SK-N-SH (cell line): ENCODE measurements at regions of chr5 and their contacts with region 1.

Region 1: GRCh38 chr5:159156426-159157238 is 52.7 kb downstream of the RNF145 start:
- DNase-seq: peak; percentile 68
- H3K4me3 ChIP-seq: peak overlapping the region in 1 of 2 experiments; percentile 27; a peak in 1 of 4 replicates
- H3K27ac ChIP-seq: no peak overlapping the region
- H3K4me1 ChIP-seq: peaks cover 0 to 18% of the 10 kb centered on the region in 2 experiments; a peak in 3 of 4 replicates
- H3K27me3 ChIP-seq: no peaks in the 10 kb centered on the region
- CTCF ChIP-seq: peak; percentile 94
- EP300 ChIP-seq: no peak
- RAD21 ChIP-seq: peak; percentile 91

Region 2: DNA sequence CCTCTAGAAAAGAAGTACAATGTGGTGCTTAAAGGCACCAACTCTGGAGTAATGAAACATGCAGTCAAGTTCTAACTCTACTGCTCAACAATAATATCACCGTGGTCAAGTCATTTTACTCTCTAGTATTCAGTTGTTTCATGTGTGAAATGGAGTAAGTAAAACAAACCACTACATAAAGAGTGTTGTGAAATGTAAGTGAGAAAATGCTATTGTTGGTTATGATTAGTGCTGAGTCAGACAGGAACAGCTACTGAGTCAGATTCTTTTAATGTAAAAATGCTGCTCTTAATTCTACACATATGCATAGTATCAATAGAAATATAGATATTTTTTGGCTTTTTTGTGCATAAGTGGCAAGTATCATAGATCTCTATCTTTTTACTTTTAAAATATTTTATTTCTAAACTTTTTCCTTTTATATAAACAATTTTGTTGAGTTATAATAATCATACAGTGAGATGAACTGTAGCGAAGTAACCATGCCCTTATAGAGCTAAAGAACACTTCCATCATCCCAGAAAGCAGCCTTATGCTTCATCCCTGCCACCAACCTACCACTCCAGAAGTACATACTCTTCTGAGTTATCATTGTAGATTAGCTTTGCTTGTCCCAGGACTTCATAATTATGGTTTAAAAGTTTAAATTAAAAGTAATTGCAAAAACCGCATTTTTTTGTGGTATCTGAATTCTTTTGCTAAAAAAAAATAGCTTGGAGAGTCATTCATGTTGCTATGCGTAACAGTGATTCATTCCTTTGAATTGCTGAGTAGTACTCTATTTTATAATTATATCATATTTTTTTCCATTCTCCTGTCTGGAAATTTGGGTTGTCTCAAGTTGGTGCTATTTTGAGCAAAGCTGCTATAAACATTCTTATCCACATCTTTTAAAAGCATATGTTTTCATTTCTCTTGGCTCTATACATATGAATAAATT is 749.5 kb before region 1 on chr5:
- CTCF ChIA-PET with region 1: no interaction called
- POLR2A ChIA-PET with region 1: no interaction called
- DNase-seq: no peak
- H3K4me3 ChIP-seq: no peak overlapping the region
- H3K27ac ChIP-seq: peak overlapping the region in 1 of 2 experiments; percentile 83; a peak in 2 of 4 replicates
- H3K4me1 ChIP-seq: no peaks in the 10 kb centered on the region
- H3K27me3 ChIP-seq: no peaks in the 10 kb centered on the region
- CTCF ChIP-seq: no peak
- EP300 ChIP-seq: no peak
- RAD21 ChIP-seq: no peak

Region 3: GRCh38 chr5:159190170-159190569 is 33.5 kb after region 1 on chr5:
- CTCF ChIA-PET with region 1: interaction called, 13 read pairs
- POLR2A ChIA-PET with region 1: no interaction called
- DNase-seq: no peak
- H3K4me3 ChIP-seq: no peak overlapping the region
- H3K27ac ChIP-seq: no peak overlapping the region
- H3K4me1 ChIP-seq: peaks cover 0 to 16% of the 10 kb centered on the region in 2 experiments; a peak in 2 of 4 replicates
- H3K27me3 ChIP-seq: no peaks in the 10 kb centered on the region
- CTCF ChIP-seq: no peak
- EP300 ChIP-seq: no peak
- RAD21 ChIP-seq: no peak

Region 4: GRCh38 chr5:159262859-159263567 is 106.4 kb after region 1 on chr5 and contains the start of gene UBLCP1:
- CTCF ChIA-PET with region 1: interaction called, 19 read pairs
- POLR2A ChIA-PET with region 1: no interaction called
- DNase-seq: peak; percentile 90
- H3K4me3 ChIP-seq: peak within 1 kb of the TSS; percentile 97 to 100
- H3K27ac ChIP-seq: peak within 1 kb of the TSS; percentile 94 to 98
- H3K4me1 ChIP-seq: peaks cover 0 to 10% of the 10 kb centered on the region in 2 experiments; a peak in 2 of 4 replicates
- H3K27me3 ChIP-seq: no peaks in the 10 kb centered on the region
- CTCF ChIP-seq: no peak
- EP300 ChIP-seq: no peak
- RAD21 ChIP-seq: no peak; the same call in 1 of the 2 replicates
- polyA plus RNA-seq, gene UBLCP1: 13.8 and 19.5 TPM in 2 replicates

Region 5: DNA sequence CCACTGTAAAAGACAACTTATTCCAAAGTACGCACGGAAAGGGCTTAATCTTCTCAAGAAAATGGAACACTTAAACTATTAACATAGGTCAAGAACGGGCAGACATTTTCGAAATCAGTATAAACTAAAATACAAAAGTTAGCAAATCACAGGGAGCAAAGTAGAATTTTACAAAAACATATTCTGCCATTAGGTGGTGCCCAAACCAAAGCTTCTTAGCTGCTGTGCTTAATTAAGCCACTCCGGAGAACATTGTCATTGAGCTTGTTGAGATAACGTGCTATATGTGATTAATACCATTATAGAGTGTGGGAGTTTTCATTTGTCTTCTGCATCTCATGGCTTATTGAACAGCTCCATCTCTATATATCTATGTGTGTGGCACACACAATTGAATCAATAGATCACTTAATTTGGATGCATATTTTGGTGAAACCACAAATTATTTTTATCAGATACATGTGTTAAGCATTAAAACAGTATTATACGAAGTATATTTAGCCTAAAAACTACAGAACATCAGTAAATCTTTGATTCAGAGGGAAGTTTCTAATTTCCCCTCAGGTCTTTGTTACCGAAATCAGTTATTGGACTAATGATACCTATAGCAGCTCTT is 129.9 kb after region 1 on chr5:
- CTCF ChIA-PET with region 1: interaction called, 12 read pairs
- POLR2A ChIA-PET with region 1: interaction called, 4 read pairs
- DNase-seq: peak; percentile 37
- H3K4me3 ChIP-seq: no peak overlapping the region; a peak in 1 of 4 replicates
- H3K27ac ChIP-seq: no peak overlapping the region
- H3K4me1 ChIP-seq: no peaks in the 10 kb centered on the region; a peak in 1 of 4 replicates
- H3K27me3 ChIP-seq: no peaks in the 10 kb centered on the region
- CTCF ChIP-seq: peak; percentile 64
- EP300 ChIP-seq: no peak
- RAD21 ChIP-seq: peak; percentile 86